ENCODE measurements at regions of chr4 and their contacts with region 1.

Region 1: DNA sequence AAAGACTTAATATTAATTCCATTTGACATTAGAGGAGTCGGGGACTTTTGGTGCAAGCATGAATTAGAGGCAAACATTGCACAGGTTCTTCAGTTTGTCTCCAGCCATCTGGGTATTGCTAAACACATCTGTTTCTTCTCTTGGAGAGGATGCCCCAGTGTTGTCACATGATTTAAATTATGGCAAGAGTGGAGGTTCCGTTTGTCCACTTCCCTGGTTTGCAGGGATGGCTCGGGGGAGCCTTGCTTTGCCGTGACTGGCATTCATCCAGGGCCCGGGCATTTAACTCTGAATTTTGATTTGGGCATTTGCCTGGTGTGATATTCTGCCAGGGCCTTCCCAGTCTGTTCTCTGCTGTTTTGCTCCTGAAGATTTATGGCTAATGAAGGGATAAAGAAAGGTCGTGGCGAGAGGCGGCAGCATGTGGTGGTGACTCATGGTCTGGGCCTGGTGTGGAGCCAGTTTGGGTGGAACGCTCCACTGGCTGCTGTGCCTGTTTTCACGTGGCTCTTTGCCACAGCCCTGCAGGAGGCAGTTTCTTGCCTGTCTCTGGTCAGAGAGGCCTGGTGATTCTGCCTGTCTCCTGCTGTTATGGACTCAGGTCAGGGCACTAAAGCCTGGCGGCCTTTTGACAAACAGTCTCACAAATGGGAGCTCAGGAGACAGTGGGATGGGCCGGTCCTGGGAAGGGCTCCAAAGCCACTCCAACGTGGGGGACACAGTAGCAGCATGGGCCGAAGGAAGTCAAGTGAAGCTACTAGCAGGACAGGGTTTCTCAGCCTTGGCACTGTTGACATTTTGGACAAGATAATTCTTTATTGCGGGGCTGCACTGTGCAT is 99.4 kb upstream of the PGRMC2 start:
- DNase-seq: peak; percentile 77 to 87
- H3K4me3 ChIP-seq: no peak overlapping the region
- H3K27ac ChIP-seq: peak overlapping the region; percentile 63
- H3K4me1 ChIP-seq: peaks cover 33% of the 10 kb centered on the region
- H3K27me3 ChIP-seq: no peaks in the 10 kb centered on the region
- CTCF ChIP-seq: no peak

Region 2: DNA sequence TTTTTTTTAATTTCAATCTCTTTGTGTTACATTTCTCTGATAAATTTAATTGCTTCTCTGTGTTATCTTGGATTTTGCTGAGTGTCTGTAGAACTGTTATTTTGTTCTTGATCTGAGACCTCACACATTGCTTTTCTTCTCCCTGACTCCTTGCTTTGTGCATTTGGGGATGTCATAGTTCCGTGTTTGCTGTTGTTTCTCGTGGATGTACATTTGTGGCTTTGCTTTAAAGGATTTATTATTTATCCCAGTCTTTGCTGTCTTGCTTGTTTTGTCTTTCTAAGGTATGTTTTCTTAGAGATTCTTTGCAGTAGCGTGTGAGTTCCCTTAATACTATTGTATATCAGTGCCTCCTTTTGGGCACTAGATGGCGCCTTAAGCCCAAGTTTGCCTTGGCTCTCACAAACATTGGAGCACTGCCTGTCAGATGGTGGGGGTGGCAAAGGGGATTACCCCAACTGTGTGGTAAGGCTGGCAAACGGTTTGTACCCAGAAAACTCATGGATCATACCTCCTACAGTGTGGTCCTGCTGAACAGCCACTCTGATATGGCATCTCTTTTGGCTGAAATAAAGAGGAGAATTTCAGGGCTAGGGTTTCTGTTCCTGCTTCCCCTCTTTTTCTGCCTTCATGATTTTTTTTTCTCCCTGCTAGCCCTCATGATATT is 195.7 kb before region 1 on chr4:
- CTCF ChIA-PET with region 1: no interaction called
- POLR2A ChIA-PET with region 1: no interaction called
- intact Hi-C with region 1: loop called (anchors 1 kb)
- DNase-seq: peak; percentile 45 to 55
- H3K4me3 ChIP-seq: no peak overlapping the region
- H3K27ac ChIP-seq: no peak overlapping the region
- H3K4me1 ChIP-seq: no peaks in the 10 kb centered on the region
- H3K27me3 ChIP-seq: no peaks in the 10 kb centered on the region
- CTCF ChIP-seq: peak; percentile 89

Region 3: GRCh38 chr4:128227991-128228571 is 158.9 kb before region 1 on chr4:
- CTCF ChIA-PET with region 1: no interaction called
- POLR2A ChIA-PET with region 1: no interaction called
- intact Hi-C with region 1: loop called (anchors 1 kb)
- DNase-seq: peak; percentile 73 to 76
- H3K4me3 ChIP-seq: no peak overlapping the region
- H3K27ac ChIP-seq: peak overlapping the region; percentile 51
- H3K4me1 ChIP-seq: peaks cover 17% of the 10 kb centered on the region
- H3K27me3 ChIP-seq: no peaks in the 10 kb centered on the region
- CTCF ChIP-seq: no peak

Region 4: GRCh38 chr4:128322995-128323394 is 64.0 kb before region 1 on chr4:
- CTCF ChIA-PET with region 1: no interaction called
- POLR2A ChIA-PET with region 1: interaction called, 6 read pairs
- intact Hi-C with region 1: loop called (anchors 1 kb)
- DNase-seq: peak; percentile 68 to 91
- H3K4me3 ChIP-seq: peak overlapping the region; percentile 33; the same call in 1 of the 2 replicates
- H3K27ac ChIP-seq: peak overlapping the region; percentile 89
- H3K4me1 ChIP-seq: peaks cover 40% of the 10 kb centered on the region
- H3K27me3 ChIP-seq: no peaks in the 10 kb centered on the region
- CTCF ChIP-seq: no peak

Region 5: DNA sequence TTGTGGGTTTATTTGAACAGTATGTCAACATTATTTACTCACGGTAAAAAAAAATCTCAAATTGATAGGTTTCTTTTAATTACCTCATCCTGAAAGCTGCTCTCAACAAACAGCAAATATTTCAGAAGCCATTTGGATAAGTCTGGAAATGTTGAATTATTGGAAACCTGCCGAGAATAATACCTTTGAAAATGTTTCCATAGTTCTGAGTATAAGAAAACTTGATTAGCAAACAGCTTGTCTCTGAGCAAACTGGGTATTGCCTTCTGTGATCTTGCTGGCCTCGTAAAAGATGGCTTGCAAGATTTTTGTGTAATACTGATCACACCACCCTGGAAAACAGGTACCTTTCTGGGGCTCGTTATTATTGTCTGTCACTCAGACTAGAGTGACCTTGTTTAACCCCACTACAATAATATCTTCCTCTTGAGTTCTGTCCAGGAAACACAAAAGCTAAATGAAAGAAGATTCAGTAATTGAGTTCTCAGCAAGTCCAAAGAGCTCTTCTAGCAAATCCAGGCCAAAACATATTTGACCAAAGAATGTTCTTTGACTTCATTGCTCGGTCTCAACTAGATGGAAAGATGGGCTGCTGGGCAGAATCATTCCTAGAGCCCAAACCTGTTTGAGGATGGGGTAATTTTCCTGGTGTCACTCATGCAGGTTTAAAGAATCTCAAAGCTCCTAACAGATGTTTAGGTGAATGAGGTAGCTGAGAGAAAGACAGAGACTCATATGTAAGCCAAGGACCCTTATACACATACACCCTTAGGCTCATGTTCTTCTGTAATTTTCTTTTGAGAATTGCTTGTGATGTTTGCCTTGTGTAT is 166.9 kb after region 1 on chr4:
- CTCF ChIA-PET with region 1: interaction called, 11 read pairs
- POLR2A ChIA-PET with region 1: no interaction called
- intact Hi-C with region 1: no loop called
- DNase-seq: peak in 1 of 2 experiments; percentile 57
- H3K4me3 ChIP-seq: peak overlapping the region; percentile 64
- H3K27ac ChIP-seq: peak overlapping the region; percentile 81
- H3K4me1 ChIP-seq: peaks cover 16% of the 10 kb centered on the region
- H3K27me3 ChIP-seq: no peaks in the 10 kb centered on the region
- CTCF ChIP-seq: no peak

Measured in PC-9 (cell line).